Activated T-helper 1 cell treated with anti-CD3 and anti-CD28 coated beads, Interleukin-12 subunit alpha, Interleukin-12 subunit beta, Interleukin-2, Interleukin-4 antibody, amounts not matched to agents 30 ng/mL and 10 ng/mL and 1 ng/mL, durations not matched to agents 14 hours and 24 hours and 36 hours (primary cell): ENCODE measurements at regions of chr12 and their contacts with region 1.

Region 1: DNA sequence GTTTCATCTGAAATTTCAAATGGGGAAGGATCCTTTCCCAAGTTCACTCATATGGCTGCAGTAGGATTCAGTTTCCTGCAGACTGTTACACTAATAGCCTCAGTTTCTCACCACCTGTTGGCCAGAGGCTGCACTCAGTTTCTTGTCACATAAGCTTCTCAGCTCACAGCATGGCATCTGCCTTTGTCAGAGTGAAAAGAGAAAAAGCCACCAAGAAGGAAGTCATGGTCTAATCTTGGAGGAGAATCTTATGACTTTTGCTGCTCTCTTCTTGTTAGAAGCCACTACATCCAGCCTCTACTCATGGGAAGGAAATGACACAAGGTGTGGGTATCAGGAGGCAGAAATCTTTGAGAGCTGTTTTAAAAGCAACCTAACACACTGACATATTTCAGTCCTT is 39.4 kb upstream of the BTG1 start:
- DNase-seq: peak; percentile 46
- H3K4me3 Mint-ChIP-seq: peak overlapping the region; percentile 19
- H3K27ac Mint-ChIP-seq: peak overlapping the region; percentile 70
- H3K4me1 Mint-ChIP-seq: peaks cover 63% of the 10 kb centered on the region
- H3K27me3 Mint-ChIP-seq: no peaks in the 10 kb centered on the region

Region 2: DNA sequence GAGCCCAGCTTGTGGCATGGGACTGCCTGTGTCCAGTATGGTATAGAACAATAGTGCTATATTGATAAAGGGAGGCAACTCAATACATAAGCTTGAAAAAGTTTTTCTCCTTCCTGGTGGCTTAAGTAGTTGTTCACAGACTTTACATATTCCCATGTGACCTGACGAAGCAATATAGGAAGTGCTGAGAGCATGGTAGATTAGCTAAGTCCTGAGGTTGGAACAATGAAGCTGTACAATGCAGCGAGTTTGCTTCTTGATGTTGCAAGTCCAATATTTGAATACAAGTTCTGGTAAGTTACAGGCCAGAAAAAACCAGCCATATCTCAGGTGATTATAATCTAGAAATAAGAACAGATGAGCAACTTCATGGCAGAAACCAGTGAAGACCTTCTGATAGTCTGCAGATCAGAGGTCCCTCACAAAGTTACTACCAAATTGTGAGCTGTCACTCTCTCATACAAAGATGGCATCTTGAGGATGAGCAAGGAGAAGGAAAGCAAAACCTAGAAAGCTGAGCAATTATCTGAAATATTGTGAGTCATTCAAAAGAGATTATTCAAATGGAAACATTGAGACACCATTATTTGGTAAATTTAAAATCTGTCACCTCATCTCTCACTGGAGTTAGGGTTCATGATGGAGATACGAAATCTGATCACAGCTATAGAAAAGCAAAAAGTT is 33.5 kb after region 1 on chr12:
- intact Hi-C with region 1: loop called (anchors 1 kb)
- DNase-seq: no peak
- H3K4me3 Mint-ChIP-seq: peak overlapping the region; percentile 17
- H3K27ac Mint-ChIP-seq: peak overlapping the region; percentile 59
- H3K4me1 Mint-ChIP-seq: peaks cover 21% of the 10 kb centered on the region
- H3K27me3 Mint-ChIP-seq: no peaks in the 10 kb centered on the region

Region 3: DNA sequence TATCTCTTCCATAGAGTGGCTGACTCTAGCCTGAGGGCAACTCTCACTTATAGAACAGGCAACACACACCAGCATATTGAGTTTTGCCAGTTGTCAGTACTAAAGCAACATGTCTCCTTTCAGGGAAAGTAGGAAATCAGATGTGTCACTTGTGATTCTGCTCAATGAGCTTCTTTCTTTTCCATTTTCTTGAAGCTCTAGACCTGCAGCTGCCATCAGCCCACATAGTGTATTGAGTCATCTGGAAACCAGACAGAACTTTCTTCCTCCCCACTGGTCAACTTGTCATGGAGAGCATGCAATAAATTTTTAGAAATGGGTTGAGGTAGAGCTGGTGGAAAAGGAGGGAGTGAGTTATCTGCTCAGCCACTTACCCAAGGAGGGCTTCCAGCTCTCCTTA is 308.8 kb after region 1 on chr12:
- intact Hi-C with region 1: no loop called
- DNase-seq: no peak
- H3K4me3 Mint-ChIP-seq: no peak overlapping the region
- H3K27ac Mint-ChIP-seq: peak overlapping the region; percentile 57
- H3K4me1 Mint-ChIP-seq: peaks cover 23% of the 10 kb centered on the region
- H3K27me3 Mint-ChIP-seq: no peaks in the 10 kb centered on the region